OCI-LY7 (cell line): ENCODE measurements at regions of chr5 and their contacts with region 1.

Region 1: GRCh38 chr5:6377905-6378765 is at the start of gene MED10:
- DNase-seq: peak; percentile 95
- H3K4me3 ChIP-seq: peak within 1 kb of the TSS; percentile 88
- H3K27ac ChIP-seq: peak within 1 kb of the TSS; percentile 39
- H3K4me1 ChIP-seq: peaks cover 18% of the 10 kb centered on the region
- CTCF ChIP-seq: no peak
- total RNA-seq, gene MED10: 7.9 and 16.2 TPM in 2 replicates

Region 2: GRCh38 chr5:6125781-6126180 is 252.4 kb before region 1 on chr5:
- CTCF ChIA-PET with region 1: interaction called, 11 read pairs
- POLR2A ChIA-PET with region 1: no interaction called
- intact Hi-C with region 1: no loop called
- DNase-seq: no peak
- H3K4me3 ChIP-seq: no peak overlapping the region
- H3K27ac ChIP-seq: no peak overlapping the region
- H3K4me1 ChIP-seq: no peaks in the 10 kb centered on the region
- CTCF ChIP-seq: no peak

Region 3: DNA sequence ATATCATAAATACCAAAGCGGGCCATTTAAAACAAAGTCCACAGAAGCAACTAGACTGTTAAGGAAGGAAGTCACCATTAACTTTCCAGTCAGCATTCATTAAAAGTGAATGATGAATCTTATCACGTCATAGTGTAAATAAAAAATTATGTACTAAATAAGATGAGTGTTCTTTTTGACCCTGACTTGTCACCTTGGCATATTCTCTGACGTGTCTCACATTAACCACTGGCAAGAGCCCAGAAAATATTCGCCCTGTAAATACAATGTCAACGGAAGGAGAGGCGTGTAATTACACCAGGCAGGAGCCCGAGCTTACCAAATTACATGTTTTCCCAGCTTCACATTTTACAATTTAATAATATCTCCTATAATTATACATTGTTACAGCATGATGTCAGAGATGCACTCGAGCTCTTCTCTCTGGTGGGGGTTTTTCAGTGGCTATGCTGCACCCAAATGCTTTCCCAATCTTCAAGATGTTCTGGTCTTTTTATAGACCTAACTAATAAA is 41.3 kb after region 1 on chr5:
- CTCF ChIA-PET with region 1: no interaction called
- POLR2A ChIA-PET with region 1: no interaction called
- intact Hi-C with region 1: no loop called
- DNase-seq: no peak
- H3K4me3 ChIP-seq: no peak overlapping the region
- H3K27ac ChIP-seq: no peak overlapping the region
- H3K4me1 ChIP-seq: no peaks in the 10 kb centered on the region
- CTCF ChIP-seq: no peak

Region 4: GRCh38 chr5:6449465-6450158 is 71.5 kb after region 1 on chr5:
- CTCF ChIA-PET with region 1: no interaction called
- POLR2A ChIA-PET with region 1: interaction called, 10 read pairs
- intact Hi-C with region 1: no loop called
- DNase-seq: no peak
- H3K4me3 ChIP-seq: no peak overlapping the region
- H3K27ac ChIP-seq: no peak overlapping the region
- H3K4me1 ChIP-seq: no peaks in the 10 kb centered on the region
- CTCF ChIP-seq: no peak

Region 5: GRCh38 chr5:6461793-6462657 is 83.9 kb after region 1 on chr5:
- CTCF ChIA-PET with region 1: no interaction called
- POLR2A ChIA-PET with region 1: no interaction called
- intact Hi-C with region 1: no loop called
- DNase-seq: no peak
- H3K4me3 ChIP-seq: no peak overlapping the region
- H3K27ac ChIP-seq: no peak overlapping the region
- H3K4me1 ChIP-seq: peaks cover 19% of the 10 kb centered on the region
- CTCF ChIP-seq: no peak

Region 6: GRCh38 chr5:6745706-6746222 is 367.6 kb after region 1 on chr5:
- CTCF ChIA-PET with region 1: interaction called, 3 read pairs
- POLR2A ChIA-PET with region 1: no interaction called
- intact Hi-C with region 1: loop called (anchors 5 kb)
- DNase-seq: peak; percentile 69
- H3K4me3 ChIP-seq: no peak overlapping the region
- H3K27ac ChIP-seq: no peak overlapping the region
- H3K4me1 ChIP-seq: peaks cover 11% of the 10 kb centered on the region
- CTCF ChIP-seq: peak; percentile 95